Activated T-helper 1 cell treated with anti-CD3 and anti-CD28 coated beads, Interleukin-12 subunit alpha, Interleukin-12 subunit beta, Interleukin-2, Interleukin-4 antibody, amounts not matched to agents 30 ng/mL and 10 ng/mL and 1 ng/mL, durations not matched to agents 14 hours and 24 hours and 36 hours (primary cell): ENCODE measurements at regions of chr2 and their contacts with region 1.

Region 1: GRCh38 chr2:217016796-217017419 is 157.0 kb upstream of the TNP1 start:
- DNase-seq: no peak
- H3K4me3 Mint-ChIP-seq: no peak overlapping the region
- H3K27ac Mint-ChIP-seq: no peak overlapping the region
- H3K4me1 Mint-ChIP-seq: no peaks in the 10 kb centered on the region
- H3K27me3 Mint-ChIP-seq: peaks cover 17% of the 10 kb centered on the region

Region 2: GRCh38 chr2:216651351-216651881 is 365.5 kb before region 1 on chr2:
- intact Hi-C with region 1: no loop called
- DNase-seq: no peak
- H3K4me3 Mint-ChIP-seq: no peak overlapping the region
- H3K27ac Mint-ChIP-seq: no peak overlapping the region
- H3K4me1 Mint-ChIP-seq: peaks cover 6% of the 10 kb centered on the region
- H3K27me3 Mint-ChIP-seq: no peaks in the 10 kb centered on the region

Region 3: GRCh38 chr2:217049956-217050355 is 33.0 kb after region 1 on chr2:
- intact Hi-C with region 1: loop called (anchors 1 kb)
- DNase-seq: no peak
- H3K4me3 Mint-ChIP-seq: no peak overlapping the region
- H3K27ac Mint-ChIP-seq: no peak overlapping the region
- H3K4me1 Mint-ChIP-seq: no peaks in the 10 kb centered on the region
- H3K27me3 Mint-ChIP-seq: peaks cover 19% of the 10 kb centered on the region